ENCODE measurements at regions of chr6 and their contacts with region 1.

Region 1: DNA sequence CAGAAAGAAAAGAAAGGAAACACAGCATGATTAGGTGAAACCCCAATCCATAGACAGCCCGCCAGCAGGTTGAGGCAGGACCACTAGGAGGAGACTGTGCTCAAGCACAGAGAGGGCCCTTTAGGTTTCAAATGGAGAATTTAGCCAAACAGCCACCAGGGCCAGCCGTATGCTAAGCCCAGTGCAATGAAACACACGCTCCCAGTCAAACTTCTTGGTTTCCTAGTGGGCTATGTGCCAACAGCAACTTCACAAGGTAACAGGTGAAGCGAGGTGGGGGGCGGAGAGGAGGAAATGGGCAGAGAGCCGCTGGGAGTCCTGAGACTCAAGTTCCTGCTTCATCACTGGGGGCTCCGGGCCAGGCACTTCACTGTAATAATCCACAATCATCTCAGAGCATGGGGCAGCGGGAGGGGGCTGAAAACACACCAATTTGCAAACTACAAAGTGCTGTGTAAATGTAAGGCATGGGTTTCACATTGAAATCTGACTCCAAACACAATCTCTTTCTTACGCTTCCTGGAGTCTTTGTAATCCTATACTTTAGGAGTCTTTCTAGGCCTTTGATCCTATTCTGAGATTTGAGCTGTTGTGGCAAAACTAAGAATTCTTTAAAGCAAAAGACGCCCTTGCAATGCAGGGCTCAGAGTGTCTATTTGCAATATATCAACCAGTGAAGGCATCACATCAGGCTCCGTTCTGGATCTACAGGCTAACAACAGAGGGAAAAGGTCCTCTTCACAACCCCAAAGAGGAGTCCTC is 117.3 kb downstream of the OPRM1 start:
- DNase-seq: peak; percentile 30
- ATAC-seq: peak; percentile 99
- H3K4me3 ChIP-seq: no peak overlapping the region
- H3K27ac ChIP-seq: no peak overlapping the region
- H3K4me1 ChIP-seq: no peaks in the 10 kb centered on the region
- H3K27me3 ChIP-seq: no peaks in the 10 kb centered on the region; a peak in 2 of 5 replicates
- CTCF ChIP-seq: peak; percentile 63
- EP300 ChIP-seq: no peak
- POLR2A ChIP-seq: no peak
- RAD21 ChIP-seq: no peak

Region 2: GRCh38 chr6:154276810-154277628 is 120.7 kb after region 1 on chr6:
- CTCF ChIA-PET with region 1: interaction called, 25 read pairs
- POLR2A ChIA-PET with region 1: no interaction called
- in situ Hi-C with region 1: loop called (anchors 5 kb)
- intact Hi-C with region 1: loop called (anchors 1 kb)
- DNase-seq: peak; percentile 42
- ATAC-seq: peak; percentile 75
- H3K4me3 ChIP-seq: no peak overlapping the region
- H3K27ac ChIP-seq: no peak overlapping the region
- H3K4me1 ChIP-seq: no peaks in the 10 kb centered on the region
- H3K27me3 ChIP-seq: peaks cover 0 to 4% of the 10 kb centered on the region in 2 experiments; a peak in 1 of 5 replicates
- CTCF ChIP-seq: peak; percentile 67
- EP300 ChIP-seq: no peak
- POLR2A ChIP-seq: no peak
- RAD21 ChIP-seq: no peak; the same call in 1 of the 2 replicates

Region 3: GRCh38 chr6:154343473-154344308 is 187.4 kb after region 1 on chr6:
- CTCF ChIA-PET with region 1: no interaction called
- POLR2A ChIA-PET with region 1: no interaction called
- in situ Hi-C with region 1: no loop called
- intact Hi-C with region 1: loop called (anchors 10 kb)
- DNase-seq: no peak
- ATAC-seq: peak; percentile 88
- H3K4me3 ChIP-seq: no peak overlapping the region
- H3K27ac ChIP-seq: no peak overlapping the region
- H3K4me1 ChIP-seq: no peaks in the 10 kb centered on the region
- H3K27me3 ChIP-seq: peaks cover 4 to 6% of the 10 kb centered on the region in 2 experiments; a peak in 3 of 5 replicates
- CTCF ChIP-seq: peak; percentile 20; the same call in 1 of the 2 replicates
- EP300 ChIP-seq: no peak
- POLR2A ChIP-seq: no peak
- RAD21 ChIP-seq: no peak

Region 4: GRCh38 chr6:154370545-154370944 is 214.2 kb after region 1 on chr6:
- CTCF ChIA-PET with region 1: no interaction called
- POLR2A ChIA-PET with region 1: no interaction called
- in situ Hi-C with region 1: loop called (anchors 10 kb)
- intact Hi-C with region 1: loop called (anchors 1 kb)
- DNase-seq: peak; percentile 25
- ATAC-seq: peak; percentile 85
- H3K4me3 ChIP-seq: no peak overlapping the region
- H3K27ac ChIP-seq: no peak overlapping the region
- H3K4me1 ChIP-seq: no peaks in the 10 kb centered on the region
- H3K27me3 ChIP-seq: peaks cover 0 to 2% of the 10 kb centered on the region in 2 experiments; a peak in 1 of 5 replicates
- CTCF ChIP-seq: peak; percentile 67
- EP300 ChIP-seq: no peak
- POLR2A ChIP-seq: no peak
- RAD21 ChIP-seq: no peak

Region 5: DNA sequence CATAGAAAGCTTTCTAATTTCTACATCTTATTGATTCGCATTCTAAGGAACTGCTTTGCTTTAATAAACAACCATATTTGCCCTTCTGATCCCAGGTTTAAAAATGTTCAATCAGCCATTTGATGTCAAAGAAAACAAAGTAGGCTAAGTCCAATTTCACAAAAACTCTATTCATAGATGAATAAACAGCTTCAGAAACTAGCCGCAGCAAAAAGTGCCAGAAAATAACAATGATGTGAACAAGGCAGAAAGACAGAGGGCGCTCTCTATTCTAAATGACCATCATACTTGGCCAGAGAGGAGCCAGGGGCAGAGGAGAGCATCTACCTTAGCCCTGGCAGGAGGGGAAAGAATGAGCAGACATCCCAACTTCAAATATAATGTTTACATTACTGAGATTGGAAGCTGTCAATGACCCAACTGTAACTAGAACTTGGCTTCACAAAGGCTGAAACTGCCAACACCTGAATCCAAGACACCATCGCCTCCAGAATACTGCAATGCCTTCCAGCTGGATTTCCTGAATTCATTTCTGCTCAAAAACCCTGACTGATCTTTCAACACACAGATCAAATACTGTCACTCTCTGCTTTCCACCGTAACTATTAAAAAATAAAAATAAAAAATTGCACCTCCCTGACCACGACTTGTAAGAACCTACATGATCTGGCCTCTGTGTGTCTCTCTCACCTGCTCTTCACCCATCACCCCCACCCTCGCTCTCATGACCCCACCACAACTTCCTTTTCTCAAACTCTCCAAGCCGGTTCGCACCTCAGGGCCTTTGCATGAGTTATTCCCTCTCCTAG is 344.7 kb after region 1 on chr6:
- CTCF ChIA-PET with region 1: no interaction called
- POLR2A ChIA-PET with region 1: no interaction called
- in situ Hi-C with region 1: loop called (anchors 25 kb)
- intact Hi-C with region 1: loop called (anchors 1 kb)
- DNase-seq: peak; percentile 66
- ATAC-seq: peak; percentile 85
- H3K4me3 ChIP-seq: no peak overlapping the region
- H3K27ac ChIP-seq: peak overlapping the region; percentile 19
- H3K4me1 ChIP-seq: peaks cover 75% of the 10 kb centered on the region
- H3K27me3 ChIP-seq: no peaks in the 10 kb centered on the region
- CTCF ChIP-seq: peak; percentile 79
- EP300 ChIP-seq: peak in 1 of 2 experiments; percentile 23; a peak in 1 of 4 replicates
- POLR2A ChIP-seq: no peak
- RAD21 ChIP-seq: peak; percentile 53; the same call in 1 of the 2 replicates

Region 6: DNA sequence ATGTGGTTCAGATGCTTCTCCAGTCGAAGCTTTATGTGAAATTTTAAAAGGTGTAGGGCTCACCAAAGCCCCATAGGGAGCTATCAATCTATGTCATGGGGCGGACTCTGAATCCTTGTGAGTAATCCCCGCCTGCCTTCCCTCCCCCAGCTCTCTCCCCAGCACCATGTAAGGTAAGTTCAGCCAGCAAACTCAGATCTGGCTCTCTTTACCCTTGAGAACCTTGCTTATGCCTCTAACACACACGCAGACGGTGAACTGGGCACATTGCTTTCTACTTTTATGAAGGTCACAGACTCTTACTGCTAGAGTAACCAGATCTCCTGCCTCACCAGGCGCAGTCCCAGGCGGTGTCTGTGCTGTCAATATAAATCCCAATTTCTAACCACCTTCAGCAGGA is 436.8 kb after region 1 on chr6:
- CTCF ChIA-PET with region 1: no interaction called
- POLR2A ChIA-PET with region 1: no interaction called
- in situ Hi-C with region 1: no loop called
- intact Hi-C with region 1: no loop called
- DNase-seq: peak; percentile 16
- ATAC-seq: peak; percentile 76
- H3K4me3 ChIP-seq: no peak overlapping the region
- H3K27ac ChIP-seq: no peak overlapping the region
- H3K4me1 ChIP-seq: 0 out of 2 replicates have a peak, but pooled peaks cover 5% of the 10 kb centered on the region
- H3K27me3 ChIP-seq: peaks cover 0 to 6% of the 10 kb centered on the region in 2 experiments; a peak in 1 of 5 replicates
- CTCF ChIP-seq: no peak
- EP300 ChIP-seq: no peak
- POLR2A ChIP-seq: no peak
- RAD21 ChIP-seq: no peak

Region 7: GRCh38 chr6:154653853-154654252 is 497.5 kb after region 1 on chr6:
- CTCF ChIA-PET with region 1: no interaction called
- POLR2A ChIA-PET with region 1: no interaction called
- in situ Hi-C with region 1: loop called (anchors 25 kb)
- intact Hi-C with region 1: no loop called
- DNase-seq: no peak
- ATAC-seq: no peak
- H3K4me3 ChIP-seq: no peak overlapping the region
- H3K27ac ChIP-seq: no peak overlapping the region
- H3K4me1 ChIP-seq: no peaks in the 10 kb centered on the region
- H3K27me3 ChIP-seq: no peaks in the 10 kb centered on the region
- CTCF ChIP-seq: no peak
- EP300 ChIP-seq: no peak
- POLR2A ChIP-seq: no peak
- RAD21 ChIP-seq: no peak